GM12878 (cell line): ENCODE measurements at regions of chr12 and their contacts with region 1.

Region 1: GRCh38 chr12:27207615-27208413 is 36.3 kb upstream of the STK38L start:
- DNase-seq: peak; percentile 93
- ATAC-seq: peak; percentile 92
- H3K4me3 ChIP-seq: peak overlapping the region; percentile 44
- H3K27ac ChIP-seq: peak overlapping the region; percentile 97
- H3K4me1 ChIP-seq: peaks cover 35% of the 10 kb centered on the region
- H3K27me3 ChIP-seq: no peaks in the 10 kb centered on the region
- CTCF ChIP-seq: no peak
- EP300 ChIP-seq: peak; percentile 65 to 78; a peak in 3 of 4 replicates
- POLR2A ChIP-seq: no peak
- RAD21 ChIP-seq: peak; percentile 34; the same call in 1 of the 2 replicates

Region 2: GRCh38 chr12:27003421-27004381 is 204.1 kb before region 1 on chr12:
- CTCF ChIA-PET with region 1: no interaction called
- POLR2A ChIA-PET with region 1: no interaction called
- RAD21 ChIA-PET with region 1: no interaction called
- SMC1A ChIA-PET with region 1: no interaction called
- in situ Hi-C with region 1: no loop called
- intact Hi-C with region 1: no loop called
- DNase-seq: no peak
- ATAC-seq: peak; percentile 27
- H3K4me3 ChIP-seq: 0 out of 2 replicates have a peak overlapping the region, but pooled peaks have one; percentile 17
- H3K27ac ChIP-seq: no peak overlapping the region
- H3K4me1 ChIP-seq: no peaks in the 10 kb centered on the region
- H3K27me3 ChIP-seq: no peaks in the 10 kb centered on the region
- CTCF ChIP-seq: no peak
- EP300 ChIP-seq: no peak
- POLR2A ChIP-seq: no peak
- RAD21 ChIP-seq: no peak

Region 3: GRCh38 chr12:27123642-27124041 is 84.2 kb before region 1 on chr12:
- CTCF ChIA-PET with region 1: no interaction called
- POLR2A ChIA-PET with region 1: no interaction called
- RAD21 ChIA-PET with region 1: no interaction called
- SMC1A ChIA-PET with region 1: no interaction called
- in situ Hi-C with region 1: no loop called
- intact Hi-C with region 1: no loop called
- DNase-seq: no peak
- ATAC-seq: peak; percentile 57
- H3K4me3 ChIP-seq: no peak overlapping the region
- H3K27ac ChIP-seq: no peak overlapping the region
- H3K4me1 ChIP-seq: no peaks in the 10 kb centered on the region
- H3K27me3 ChIP-seq: no peaks in the 10 kb centered on the region
- CTCF ChIP-seq: peak; percentile 11 to 32 (median 24); a peak in 1 of 6 replicates
- EP300 ChIP-seq: no peak
- POLR2A ChIP-seq: no peak
- RAD21 ChIP-seq: peak; percentile 60

Region 4: DNA sequence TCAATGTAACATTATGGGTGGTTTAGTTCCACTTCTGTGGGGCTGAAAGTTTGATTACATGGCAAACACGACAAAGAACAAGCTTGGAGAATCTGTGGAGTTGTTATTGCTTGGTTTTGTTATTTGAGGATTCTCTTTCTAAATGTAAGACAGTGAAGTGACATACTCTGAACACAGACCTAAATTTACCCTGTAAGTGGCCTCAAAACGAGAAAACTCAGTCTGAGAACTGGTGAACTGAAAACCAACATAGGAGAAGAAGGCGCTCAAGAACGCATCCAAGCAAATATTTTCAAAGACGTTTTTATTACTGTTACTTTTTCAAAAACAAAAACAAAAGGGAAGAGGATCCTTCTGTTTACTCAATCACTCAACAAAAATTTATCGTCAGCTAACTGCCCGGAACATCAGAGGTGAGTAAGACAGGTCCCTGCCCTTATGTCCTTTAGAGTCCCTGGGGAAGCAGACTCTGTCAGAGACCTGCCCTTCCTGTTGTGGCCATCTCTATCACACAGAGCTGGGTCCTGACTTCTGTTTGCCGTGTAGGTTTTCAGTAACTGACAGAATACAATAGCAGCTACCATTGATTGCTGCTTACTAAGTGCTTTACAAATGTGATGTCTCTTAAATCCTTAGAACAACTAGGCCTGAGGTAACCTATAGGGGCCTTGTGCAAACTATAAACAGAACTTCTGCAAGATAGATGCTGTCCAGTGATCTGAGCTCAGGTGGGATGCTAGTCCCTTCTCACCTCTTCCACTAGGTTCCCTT is 46.2 kb before region 1 on chr12:
- CTCF ChIA-PET with region 1: interaction called, 3 read pairs
- POLR2A ChIA-PET with region 1: interaction called, 8 read pairs
- RAD21 ChIA-PET with region 1: interaction called, 13 read pairs
- SMC1A ChIA-PET with region 1: interaction called, 35 read pairs
- in situ Hi-C with region 1: no loop called
- intact Hi-C with region 1: loop called (anchors 5 kb)
- DNase-seq: peak; percentile 62
- ATAC-seq: peak; percentile 93
- H3K4me3 ChIP-seq: peak overlapping the region; percentile 15; the same call in 1 of the 2 replicates
- H3K27ac ChIP-seq: peak overlapping the region; percentile 64
- H3K4me1 ChIP-seq: peaks cover 3% of the 10 kb centered on the region; the same call in 1 of the 2 replicates
- H3K27me3 ChIP-seq: no peaks in the 10 kb centered on the region
- CTCF ChIP-seq: no peak
- EP300 ChIP-seq: no peak
- POLR2A ChIP-seq: no peak
- RAD21 ChIP-seq: no peak

Region 5: GRCh38 chr12:27237790-27238771 is 30.3 kb after region 1 on chr12:
- CTCF ChIA-PET with region 1: interaction called, 9 read pairs
- POLR2A ChIA-PET with region 1: interaction called, 36 read pairs
- RAD21 ChIA-PET with region 1: interaction called, 50 read pairs
- SMC1A ChIA-PET with region 1: interaction called, 40 read pairs
- in situ Hi-C with region 1: no loop called
- intact Hi-C with region 1: no loop called
- DNase-seq: peak; percentile 72
- ATAC-seq: peak; percentile 82
- H3K4me3 ChIP-seq: peak overlapping the region; percentile 31
- H3K27ac ChIP-seq: peak overlapping the region; percentile 82
- H3K4me1 ChIP-seq: peaks cover 32% of the 10 kb centered on the region
- H3K27me3 ChIP-seq: no peaks in the 10 kb centered on the region
- CTCF ChIP-seq: no peak
- EP300 ChIP-seq: peak in 1 of 2 experiments; percentile 40; a peak in 1 of 4 replicates
- POLR2A ChIP-seq: no peak
- RAD21 ChIP-seq: peak; percentile 7; the same call in 1 of the 2 replicates

Region 6: DNA sequence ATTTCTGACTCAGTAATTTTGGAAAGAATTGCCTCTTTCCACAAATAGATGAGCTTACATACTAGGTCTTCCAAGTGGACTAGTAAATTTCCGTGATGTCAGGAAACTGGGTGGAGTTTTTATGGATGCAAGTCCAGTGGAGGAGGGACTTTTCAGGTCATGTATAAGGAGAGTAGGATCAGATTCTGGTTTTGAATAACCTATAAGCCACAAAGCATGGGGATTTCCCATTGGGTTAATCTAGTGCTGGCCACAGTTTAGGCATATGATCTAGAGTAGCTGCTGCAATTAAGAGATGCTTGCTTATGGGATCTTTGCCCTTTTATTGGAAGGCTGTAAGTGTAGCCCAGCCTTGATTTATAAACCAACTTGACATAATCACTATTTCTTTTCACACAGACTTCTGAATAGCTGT is 70.0 kb after region 1 on chr12:
- CTCF ChIA-PET with region 1: interaction called, 4 read pairs
- POLR2A ChIA-PET with region 1: interaction called, 4 read pairs
- RAD21 ChIA-PET with region 1: interaction called, 13 read pairs
- SMC1A ChIA-PET with region 1: interaction called, 18 read pairs
- in situ Hi-C with region 1: no loop called
- intact Hi-C with region 1: no loop called
- DNase-seq: peak; percentile 73
- ATAC-seq: peak; percentile 91
- H3K4me3 ChIP-seq: no peak overlapping the region
- H3K27ac ChIP-seq: peak overlapping the region; percentile 61; the same call in 1 of the 2 replicates
- H3K4me1 ChIP-seq: peaks cover 22% of the 10 kb centered on the region
- H3K27me3 ChIP-seq: no peaks in the 10 kb centered on the region
- CTCF ChIP-seq: no peak
- EP300 ChIP-seq: peak; percentile 64 to 71; a peak in 3 of 4 replicates
- POLR2A ChIP-seq: no peak
- RAD21 ChIP-seq: no peak